ENCODE measurements at regions of chr18 and their contacts with region 1.

Region 1: DNA sequence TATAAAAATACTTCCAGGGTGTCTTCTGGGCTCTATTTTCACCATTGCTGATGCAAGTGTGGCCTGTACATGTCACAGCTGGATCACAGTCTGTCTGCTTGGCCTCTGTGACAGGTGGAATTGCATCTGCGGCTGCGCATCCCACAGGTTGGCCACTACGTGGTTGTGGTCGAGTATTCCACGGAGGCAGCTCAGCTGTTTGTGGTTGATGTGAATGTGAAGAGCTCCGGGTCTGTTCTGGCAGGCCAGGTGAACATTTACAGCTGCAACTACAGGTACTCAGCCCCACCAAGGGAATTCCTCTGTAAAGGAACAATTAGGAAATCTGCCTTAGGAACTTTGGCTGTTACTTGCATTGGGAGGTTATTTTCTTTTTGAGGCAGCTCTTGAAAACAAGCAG is 144.5 kb downstream of the LAMA3 start:
- DNase-seq: no peak
- H3K4me3 ChIP-seq: no peak overlapping the region
- H3K27ac ChIP-seq: peak overlapping the region; percentile 49
- H3K4me1 ChIP-seq: peaks cover 6% of the 10 kb centered on the region
- H3K27me3 ChIP-seq: no peaks in the 10 kb centered on the region
- CTCF ChIP-seq: no peak
- POLR2A ChIP-seq: no peak

Region 2: DNA sequence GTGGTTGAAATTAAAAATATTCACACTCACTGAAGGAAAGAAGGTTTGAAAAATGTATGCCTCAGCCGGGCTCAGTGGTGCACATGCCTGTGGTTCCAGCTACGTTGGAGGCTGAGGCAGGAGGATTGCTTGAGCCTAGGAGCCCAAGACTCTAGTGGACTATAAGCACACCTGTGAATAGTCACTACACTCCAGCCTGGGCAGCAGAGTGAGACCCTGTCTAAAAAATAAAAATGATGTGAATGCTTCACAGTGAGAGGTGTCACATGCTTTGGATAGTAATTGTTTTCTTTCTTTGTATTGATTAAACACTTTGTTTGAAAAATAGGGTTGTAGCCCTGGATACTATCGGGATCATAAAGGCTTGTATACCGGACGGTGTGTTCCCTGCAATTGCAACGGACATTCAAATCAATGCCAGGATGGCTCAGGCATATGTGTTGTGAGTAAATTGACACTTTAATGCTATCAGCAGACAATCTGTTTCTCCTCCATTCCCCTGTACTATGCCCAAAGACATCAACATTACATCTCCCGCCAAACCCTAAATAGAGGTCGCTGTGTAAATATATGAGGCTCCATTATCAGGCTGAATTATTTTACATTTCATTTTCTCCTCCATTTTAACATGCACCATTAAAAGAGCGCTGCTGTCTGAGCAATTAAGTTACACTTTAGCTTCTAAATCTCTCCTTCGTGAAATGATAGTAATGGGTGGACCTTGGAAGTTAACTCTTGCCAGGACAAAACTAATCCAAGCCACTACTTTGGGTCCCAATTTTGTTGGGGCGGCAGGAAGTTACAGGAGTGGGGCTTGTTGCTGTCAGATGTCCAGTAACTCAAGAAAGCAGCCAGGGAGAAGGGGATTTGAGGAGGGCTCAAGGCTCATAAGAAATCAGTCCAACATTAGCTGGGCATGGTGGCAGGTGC is 42.5 kb after region 1 on chr18:
- intact Hi-C with region 1: loop called (anchors 5 kb)
- DNase-seq: peak in 1 of 2 donors; percentile 69
- H3K4me3 ChIP-seq: peak overlapping the region in 1 of 2 donors; percentile 42
- H3K27ac ChIP-seq: no peak overlapping the region
- H3K4me1 ChIP-seq: no peaks in the 10 kb centered on the region
- H3K27me3 ChIP-seq: no peaks in the 10 kb centered on the region
- CTCF ChIP-seq: no peak
- POLR2A ChIP-seq: no peak

Measured in vagina (tissue), 2 donors.